WTC11 (cell line): ENCODE measurements at regions of chr2 and their contacts with region 1.

Region 1: DNA sequence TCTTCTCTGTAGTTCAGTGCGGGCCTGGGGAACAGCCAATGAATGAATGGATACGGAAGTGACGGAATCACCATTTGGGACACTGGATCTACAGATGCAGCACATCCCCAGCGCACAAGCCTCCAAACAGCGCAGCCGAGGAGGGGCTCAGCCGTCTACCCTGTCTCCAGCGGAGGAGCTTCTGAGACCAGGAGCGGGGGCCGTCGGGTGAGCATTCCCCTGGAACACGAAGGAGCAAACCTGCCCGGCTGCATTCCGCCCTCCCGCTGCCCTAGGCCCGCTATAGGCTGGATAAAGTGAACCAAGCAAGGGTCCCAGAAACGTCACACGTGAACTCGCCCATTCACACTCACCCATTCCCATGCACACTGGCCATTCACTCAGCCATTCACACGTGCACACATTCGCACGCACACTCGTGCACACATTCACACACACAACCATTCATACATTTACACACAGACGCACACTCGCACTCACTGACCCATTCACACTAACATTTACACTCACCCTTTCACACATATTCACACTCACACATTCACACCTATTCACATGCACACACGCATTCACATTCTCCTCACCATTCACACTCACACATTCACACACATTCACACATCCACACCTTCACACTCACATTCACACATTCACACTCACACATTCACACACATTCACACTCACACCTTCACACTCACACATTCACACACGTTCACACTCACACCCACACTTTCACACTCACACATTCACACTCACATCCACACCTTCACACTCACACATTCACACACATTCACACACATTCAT is 63.4 kb downstream of the BIN1 start:
- DNase-seq: no peak
- ATAC-seq: peak; percentile 53
- H3K4me3 Mint-ChIP-seq: no peak overlapping the region
- H3K27ac Mint-ChIP-seq: no peak overlapping the region
- H3K4me1 Mint-ChIP-seq: no peaks in the 10 kb centered on the region
- H3K27me3 Mint-ChIP-seq: peaks cover 3% of the 10 kb centered on the region
- CTCF ChIP-seq: no peak

Region 2: GRCh38 chr2:126809340-126809739 is 234.2 kb before region 1 on chr2:
- CTCF ChIA-PET with region 1: no interaction called
- POLR2A ChIA-PET with region 1: no interaction called
- DNase-seq: no peak
- ATAC-seq: peak; percentile 89
- H3K4me3 Mint-ChIP-seq: no peak overlapping the region
- H3K27ac Mint-ChIP-seq: no peak overlapping the region
- H3K4me1 Mint-ChIP-seq: peaks cover 19% of the 10 kb centered on the region
- H3K27me3 Mint-ChIP-seq: no peaks in the 10 kb centered on the region
- CTCF ChIP-seq: no peak

Region 3: GRCh38 chr2:127025359-127026166 is 18.0 kb before region 1 on chr2:
- CTCF ChIA-PET with region 1: interaction called, 10 read pairs
- POLR2A ChIA-PET with region 1: interaction called, 3 read pairs
- DNase-seq: peak; percentile 83
- ATAC-seq: peak; percentile 73
- H3K4me3 Mint-ChIP-seq: peak overlapping the region; percentile 77
- H3K27ac Mint-ChIP-seq: no peak overlapping the region; the same call in 1 of the 2 replicates
- H3K4me1 Mint-ChIP-seq: peaks cover 9% of the 10 kb centered on the region
- H3K27me3 Mint-ChIP-seq: peaks cover 12% of the 10 kb centered on the region
- CTCF ChIP-seq: 0 out of 2 replicates have a peak, but pooled peaks have one; percentile 30